Common myeloid progenitor, CD34-positive (primary cell): ENCODE measurements at regions of chr9 and their contacts with region 1.

Region 1: DNA sequence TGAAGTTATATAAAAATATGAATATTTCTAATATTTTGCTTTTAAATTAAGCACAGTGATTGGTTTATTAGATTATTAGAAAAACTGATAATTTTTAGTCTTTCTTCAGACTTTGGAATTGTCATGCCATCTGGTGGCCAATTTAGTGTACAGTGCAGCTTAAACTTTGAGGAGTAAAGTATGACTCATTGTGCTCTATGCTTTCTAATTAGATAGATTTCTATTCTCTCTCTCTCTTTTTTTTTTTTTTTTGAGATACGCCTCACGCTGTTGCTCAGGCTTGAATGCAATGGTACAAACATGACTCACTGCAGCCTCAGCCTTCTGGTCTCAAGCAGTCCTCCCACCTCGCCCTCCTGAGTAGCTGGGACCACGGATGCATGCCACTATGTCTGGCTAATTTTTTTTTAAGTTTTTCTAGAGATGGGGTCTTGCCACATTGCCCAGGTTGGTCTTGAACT is 42.1 kb upstream of the GPR21 start:
- DNase-seq: peak; percentile 86 to 95 (median 93)
- H3K4me3 ChIP-seq: no peak overlapping the region
- H3K27ac ChIP-seq: no peak overlapping the region
- H3K4me1 ChIP-seq: peaks cover 0 to 12% (median 0%) of the 10 kb centered on the region in 4 experiments
- H3K27me3 ChIP-seq: no peaks in the 10 kb centered on the region

Region 2: GRCh38 chr9:122754825-122755224 is 236.6 kb before region 1 on chr9:
- CTCF ChIA-PET with region 1: no interaction called
- POLR2A ChIA-PET with region 1: no interaction called
- DNase-seq: no peak
- H3K4me3 ChIP-seq: no peak overlapping the region
- H3K27ac ChIP-seq: no peak overlapping the region
- H3K4me1 ChIP-seq: no peaks in the 10 kb centered on the region
- H3K27me3 ChIP-seq: no peaks in the 10 kb centered on the region

Region 3: DNA sequence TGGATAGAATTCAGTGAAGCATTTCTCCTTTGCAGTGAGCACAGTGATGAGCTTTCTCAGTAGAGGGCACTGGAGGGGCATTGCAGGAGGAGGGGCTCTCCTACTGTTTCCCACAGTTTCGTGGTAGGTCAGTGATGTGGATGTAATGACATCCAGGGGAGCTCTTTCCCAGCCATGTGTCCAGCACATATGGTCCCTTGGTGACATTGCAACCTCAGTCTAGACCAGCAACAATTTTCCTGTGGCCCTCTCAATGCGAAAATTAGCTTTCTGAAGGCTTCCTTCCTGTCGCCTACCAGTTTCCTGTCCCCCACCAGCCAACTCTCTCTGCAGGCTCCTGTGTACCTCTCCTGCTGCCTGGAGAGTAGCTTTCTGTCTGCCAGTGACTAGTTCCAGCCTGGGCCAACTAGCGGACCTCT is 156.1 kb before region 1 on chr9:
- CTCF ChIA-PET with region 1: interaction called, 11 read pairs
- POLR2A ChIA-PET with region 1: interaction called, 3 read pairs
- DNase-seq: peak in 2 of 3 donors; percentile 31 to 52
- H3K4me3 ChIP-seq: peak overlapping the region in 6 of 7 experiments; percentile 4 to 69 (median 59)
- H3K27ac ChIP-seq: peak overlapping the region; percentile 15 to 39
- H3K4me1 ChIP-seq: peaks cover 6 to 16% (median 11%) of the 10 kb centered on the region in 4 experiments
- H3K27me3 ChIP-seq: no peaks in the 10 kb centered on the region

Region 4: DNA sequence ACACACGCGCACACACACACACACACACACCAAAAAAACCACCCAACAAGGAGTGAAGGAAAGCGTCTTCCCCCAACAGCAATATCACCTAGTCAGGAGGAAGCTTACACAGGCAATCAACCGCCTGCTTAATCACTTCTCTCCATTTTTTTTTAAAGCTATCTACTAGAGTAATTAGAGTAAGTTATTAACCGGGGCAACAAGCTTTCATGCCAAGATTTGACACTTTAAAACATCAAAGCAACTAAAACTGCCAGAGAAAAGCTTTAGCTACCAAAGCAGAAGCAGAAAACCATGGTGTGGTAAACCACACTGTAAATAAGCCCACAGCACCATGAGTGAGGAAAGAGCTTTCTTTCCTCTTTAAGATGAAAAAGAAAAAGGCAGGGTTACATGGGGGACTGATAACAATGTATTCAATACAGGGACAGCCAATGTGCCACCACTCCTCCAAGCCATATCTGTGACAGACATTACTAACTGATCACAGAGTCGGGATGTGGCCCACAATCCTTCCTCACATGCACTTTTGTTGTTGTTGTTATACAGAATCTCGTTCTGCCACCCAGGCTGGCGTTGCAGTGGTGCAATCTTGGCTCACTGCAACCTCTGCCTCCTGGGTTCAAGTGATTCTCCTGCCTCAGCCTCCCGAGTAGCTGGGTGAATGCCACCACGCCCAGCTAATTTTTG is 646.7 kb after region 1 on chr9:
- CTCF ChIA-PET with region 1: no interaction called
- POLR2A ChIA-PET with region 1: interaction called, 10 read pairs
- DNase-seq: peak; percentile 81 to 97 (median 96)
- H3K4me3 ChIP-seq: peak overlapping the region in 6 of 7 experiments; percentile 40 to 75 (median 66)
- H3K27ac ChIP-seq: peak overlapping the region in 1 of 2 experiments; percentile 39
- H3K4me1 ChIP-seq: peaks cover 9 to 18% (median 16%) of the 10 kb centered on the region in 4 experiments
- H3K27me3 ChIP-seq: peaks cover 0 to 45% (median 10%) of the 10 kb centered on the region in 5 experiments